Naive thymus-derived CD4-positive, alpha-beta T cell (primary cell): ENCODE measurements at regions of chr18 and their contacts with region 1.

Region 1: DNA sequence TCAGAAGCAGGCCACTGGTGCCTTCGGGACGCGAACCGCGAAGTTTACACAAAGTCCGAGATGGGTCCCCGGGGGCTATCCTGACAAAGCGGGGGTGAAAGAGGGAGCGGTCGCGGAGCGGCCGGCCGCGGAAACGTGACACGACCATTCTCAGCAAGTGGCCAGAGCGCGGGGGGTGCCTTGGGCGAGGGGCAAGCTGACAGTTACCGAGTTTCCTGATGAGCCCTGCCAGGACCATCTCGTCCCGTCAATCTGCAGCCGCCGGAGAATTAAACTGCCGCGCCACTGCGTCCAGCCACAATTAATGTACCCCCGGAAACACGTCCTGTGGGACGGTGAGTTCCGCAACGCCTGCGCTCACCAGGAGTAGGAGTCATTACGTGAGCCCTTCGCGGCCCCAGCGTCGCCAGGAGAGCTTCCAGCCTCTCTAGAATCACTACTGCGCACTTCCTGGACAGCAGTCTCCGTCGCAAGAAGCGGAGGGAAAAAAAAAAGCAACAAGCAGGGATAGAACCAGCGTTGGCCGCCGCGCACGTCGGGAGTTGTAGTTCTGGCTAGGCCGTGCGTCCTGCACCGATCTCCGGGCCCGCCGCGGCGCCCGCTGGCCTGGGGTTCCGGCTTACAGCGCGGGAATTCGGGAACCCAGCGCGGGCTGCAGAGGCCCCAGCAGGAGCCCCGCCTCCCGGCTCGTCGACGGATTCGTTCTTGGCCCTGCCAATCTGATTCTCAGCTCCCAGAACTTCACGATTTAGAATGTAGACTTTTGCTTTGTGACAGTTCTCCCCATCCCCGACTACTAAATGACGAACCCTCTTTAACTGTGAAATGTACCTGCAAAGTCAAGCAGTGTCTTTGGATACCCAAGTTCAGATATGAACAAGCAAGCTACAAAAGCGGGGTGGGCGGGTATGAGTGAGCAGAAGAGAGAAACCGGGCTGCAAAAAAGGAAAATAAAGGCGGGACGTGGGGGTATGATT is at the start of gene RTTN:
- DNase-seq: peak; percentile 88 to 95 (median 92)
- ATAC-seq: peak; percentile 96
- H3K4me3 ChIP-seq: peak within 1 kb of the TSS; percentile 91
- H3K4me3 Mint-ChIP-seq: peak within 1 kb of the TSS; percentile 90 to 99 (median 97)
- H3K27ac ChIP-seq: peak within 1 kb of the TSS; percentile 87
- H3K27ac Mint-ChIP-seq: peak within 1 kb of the TSS; percentile 97 to 100 (median 99)
- H3K4me1 ChIP-seq: peaks cover 5 to 9% of the 10 kb centered on the region in 2 donors
- H3K4me1 Mint-ChIP-seq: peaks cover 8 to 42% (median 34%) of the 10 kb centered on the region in 7 donors
- H3K27me3 ChIP-seq: no peaks in the 10 kb centered on the region
- H3K27me3 Mint-ChIP-seq: peaks cover 0 to 11% (median 0%) of the 10 kb centered on the region in 5 donors
- total RNA-seq, gene RTTN: 26.8 to 33.2 (median 28.2) TPM

Region 2: GRCh38 chr18:70288851-70289328 is 83.2 kb after region 1 on chr18 and contains the start of gene SOCS6:
- CTCF ChIA-PET with region 1: no interaction called
- POLR2A ChIA-PET with region 1: no interaction called
- intact Hi-C with region 1: loop called (anchors 2 kb)
- DNase-seq: peak in 7 of 9 donors; percentile 12 to 63 (median 26)
- ATAC-seq: peak; percentile 67
- H3K4me3 ChIP-seq: peak within 1 kb of the TSS; percentile 48
- H3K4me3 Mint-ChIP-seq: peak within 1 kb of the TSS; percentile 84 to 93 (median 88)
- H3K27ac ChIP-seq: no peak within 1 kb of the TSS
- H3K27ac Mint-ChIP-seq: peak within 1 kb of the TSS in 7 of 9 donors; percentile 4 to 92 (median 46)
- H3K4me1 ChIP-seq: no peaks in the 10 kb centered on the region
- H3K4me1 Mint-ChIP-seq: peaks cover 10 to 29% (median 26%) of the 10 kb centered on the region in 7 donors
- H3K27me3 ChIP-seq: no peaks in the 10 kb centered on the region
- H3K27me3 Mint-ChIP-seq: peaks cover 13 to 57% (median 41%) of the 10 kb centered on the region in 5 donors
- total RNA-seq, gene SOCS6: 1.8 to 4.6 (median 4.2) TPM

Region 3: DNA sequence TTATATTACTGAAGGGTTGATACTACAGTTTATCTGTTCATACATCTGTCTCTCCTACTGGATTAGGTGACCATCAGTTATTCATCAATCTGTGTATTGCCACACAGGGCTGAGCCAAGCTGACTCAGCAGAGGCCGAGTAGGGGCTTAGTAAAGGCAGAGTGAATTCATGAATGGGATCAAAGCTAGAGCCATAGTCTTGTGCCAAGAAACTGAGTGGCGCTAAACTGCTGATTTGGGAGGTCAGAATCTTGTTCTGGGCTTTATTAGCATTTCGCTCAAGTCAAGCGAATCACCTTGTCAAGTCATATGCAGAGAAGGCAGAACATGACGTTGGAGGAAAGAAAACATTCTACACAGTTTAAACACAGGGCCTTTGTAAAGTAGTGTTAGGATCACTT is 117.2 kb after region 1 on chr18:
- CTCF ChIA-PET with region 1: no interaction called
- POLR2A ChIA-PET with region 1: no interaction called
- intact Hi-C with region 1: no loop called
- DNase-seq: no peak
- ATAC-seq: no peak
- H3K4me3 ChIP-seq: no peak overlapping the region
- H3K4me3 Mint-ChIP-seq: no peak overlapping the region
- H3K27ac ChIP-seq: no peak overlapping the region
- H3K27ac Mint-ChIP-seq: no peak overlapping the region
- H3K4me1 ChIP-seq: no peaks in the 10 kb centered on the region
- H3K4me1 Mint-ChIP-seq: peaks cover 0 to 1% (median 0%) of the 10 kb centered on the region in 7 donors
- H3K27me3 ChIP-seq: no peaks in the 10 kb centered on the region
- H3K27me3 Mint-ChIP-seq: peaks cover 0 to 2% (median 0%) of the 10 kb centered on the region in 5 donors

Region 4: GRCh38 chr18:70754486-70754885 is 548.8 kb after region 1 on chr18:
- CTCF ChIA-PET with region 1: no interaction called
- POLR2A ChIA-PET with region 1: no interaction called
- intact Hi-C with region 1: no loop called
- DNase-seq: no peak
- ATAC-seq: no peak
- H3K4me3 ChIP-seq: no peak overlapping the region
- H3K4me3 Mint-ChIP-seq: no peak overlapping the region
- H3K27ac ChIP-seq: no peak overlapping the region
- H3K27ac Mint-ChIP-seq: no peak overlapping the region
- H3K4me1 ChIP-seq: no peaks in the 10 kb centered on the region
- H3K4me1 Mint-ChIP-seq: peaks cover 0 to 7% (median 0%) of the 10 kb centered on the region in 7 donors
- H3K27me3 ChIP-seq: no peaks in the 10 kb centered on the region
- H3K27me3 Mint-ChIP-seq: no peaks in the 10 kb centered on the region